ENCODE measurements at regions of chr19 and their contacts with region 1.

Region 1: GRCh38 chr19:35436477-35437405 is 11.3 kb upstream of the FFAR2 start:
- DNase-seq: peak; percentile 73
- H3K4me3 Mint-ChIP-seq: peak overlapping the region; percentile 68
- H3K27ac Mint-ChIP-seq: peak overlapping the region; percentile 78
- H3K4me1 Mint-ChIP-seq: peaks cover 17% of the 10 kb centered on the region
- H3K27me3 Mint-ChIP-seq: peaks cover 24% of the 10 kb centered on the region

Region 2: GRCh38 chr19:35451338-35452096 is 14.8 kb after region 1 on chr19:
- intact Hi-C with region 1: loop called (anchors 1 kb)
- DNase-seq: peak; percentile 66
- H3K4me3 Mint-ChIP-seq: peak overlapping the region; percentile 40
- H3K27ac Mint-ChIP-seq: peak overlapping the region; percentile 65
- H3K4me1 Mint-ChIP-seq: peaks cover 20% of the 10 kb centered on the region
- H3K27me3 Mint-ChIP-seq: peaks cover 36% of the 10 kb centered on the region

Measured in activated CD4-positive, alpha-beta T cell treated with anti-CD3 and anti-CD28 coated beads, Interleukin-2, amount 10 ng/mL, durations not matched to agents 24 days and 14 days (primary cell).